Activated naive CD4-positive, alpha-beta T cell treated with anti-CD3 and anti-CD28 coated beads for 36 hours (primary cell): ENCODE measurements at regions of chr7 and their contacts with region 1.

Region 1: DNA sequence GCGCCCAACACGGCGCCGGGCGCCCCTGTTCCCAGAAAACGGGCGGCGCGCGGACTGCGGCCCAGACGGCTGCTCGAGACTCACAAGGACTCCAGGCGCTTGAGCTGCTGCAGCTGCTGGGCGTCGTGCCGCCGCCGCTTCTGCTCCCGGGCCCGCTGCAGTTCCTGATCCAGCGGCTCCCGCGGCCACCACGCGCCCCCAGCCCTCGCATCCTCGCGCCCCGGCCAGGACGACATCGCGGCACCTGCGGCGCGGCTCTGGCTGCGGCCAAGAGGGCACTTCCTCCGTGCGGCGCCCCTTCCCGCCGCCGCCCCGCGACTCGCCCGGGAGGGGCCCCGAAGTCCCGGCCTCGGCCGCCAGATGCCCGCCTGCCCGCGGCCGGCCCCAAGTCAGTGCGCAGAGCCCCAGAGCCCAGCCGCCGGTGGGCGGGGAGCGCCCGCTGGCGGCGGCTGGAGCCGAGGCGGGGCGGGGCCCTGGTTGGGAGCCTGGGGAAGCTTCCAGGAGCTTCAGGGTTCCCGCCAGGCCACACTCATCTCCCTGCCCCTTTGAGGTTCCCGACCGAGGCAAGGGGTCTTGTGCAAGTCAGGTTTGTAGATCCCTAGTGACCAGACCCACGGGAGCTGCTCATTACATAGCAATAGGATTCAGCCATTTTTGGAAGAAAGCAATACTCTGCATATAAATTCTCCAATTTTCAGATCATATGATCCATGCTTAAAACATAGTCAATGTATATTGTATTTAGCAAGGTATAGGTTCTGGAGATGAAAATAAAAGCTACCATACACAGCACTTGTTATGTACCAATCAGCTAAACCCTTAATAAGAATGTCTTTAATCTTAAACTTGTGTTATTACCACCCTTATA is 14.2 kb upstream of the FKBP9 start:
- DNase-seq: peak; percentile 74
- H3K4me3 Mint-ChIP-seq: peak overlapping the region; percentile 66
- H3K27ac Mint-ChIP-seq: no peak overlapping the region
- H3K4me1 Mint-ChIP-seq: peaks cover 18% of the 10 kb centered on the region
- H3K27me3 Mint-ChIP-seq: no peaks in the 10 kb centered on the region

Region 2: GRCh38 chr7:32495298-32496176 is 447.5 kb before region 1 on chr7 and contains the start of gene AVL9:
- CTCF ChIA-PET with region 1: no interaction called
- intact Hi-C with region 1: loop called (anchors 1 kb)
- DNase-seq: peak; percentile 99
- H3K4me3 Mint-ChIP-seq: peak within 1 kb of the TSS; percentile 96
- H3K27ac Mint-ChIP-seq: peak within 1 kb of the TSS; percentile 92
- H3K4me1 Mint-ChIP-seq: peaks cover 38% of the 10 kb centered on the region
- H3K27me3 Mint-ChIP-seq: no peaks in the 10 kb centered on the region
- total RNA-seq, gene AVL9: 29.6 to 38.0 TPM

Region 3: GRCh38 chr7:32761451-32762205 is 181.4 kb before region 1 on chr7:
- CTCF ChIA-PET with region 1: no interaction called
- intact Hi-C with region 1: loop called (anchors 2 kb)
- DNase-seq: no peak
- H3K4me3 Mint-ChIP-seq: no peak overlapping the region
- H3K27ac Mint-ChIP-seq: no peak overlapping the region
- H3K4me1 Mint-ChIP-seq: peaks cover 9% of the 10 kb centered on the region
- H3K27me3 Mint-ChIP-seq: peaks cover 40% of the 10 kb centered on the region

Region 4: GRCh38 chr7:32891800-32892520 is 51.1 kb before region 1 on chr7:
- CTCF ChIA-PET with region 1: interaction called, 6 read pairs
- intact Hi-C with region 1: loop called (anchors 1 kb)
- DNase-seq: peak; percentile 99
- H3K4me3 Mint-ChIP-seq: peak overlapping the region; percentile 89
- H3K27ac Mint-ChIP-seq: peak overlapping the region; percentile 99
- H3K4me1 Mint-ChIP-seq: peaks cover 47% of the 10 kb centered on the region
- H3K27me3 Mint-ChIP-seq: no peaks in the 10 kb centered on the region

Region 5: DNA sequence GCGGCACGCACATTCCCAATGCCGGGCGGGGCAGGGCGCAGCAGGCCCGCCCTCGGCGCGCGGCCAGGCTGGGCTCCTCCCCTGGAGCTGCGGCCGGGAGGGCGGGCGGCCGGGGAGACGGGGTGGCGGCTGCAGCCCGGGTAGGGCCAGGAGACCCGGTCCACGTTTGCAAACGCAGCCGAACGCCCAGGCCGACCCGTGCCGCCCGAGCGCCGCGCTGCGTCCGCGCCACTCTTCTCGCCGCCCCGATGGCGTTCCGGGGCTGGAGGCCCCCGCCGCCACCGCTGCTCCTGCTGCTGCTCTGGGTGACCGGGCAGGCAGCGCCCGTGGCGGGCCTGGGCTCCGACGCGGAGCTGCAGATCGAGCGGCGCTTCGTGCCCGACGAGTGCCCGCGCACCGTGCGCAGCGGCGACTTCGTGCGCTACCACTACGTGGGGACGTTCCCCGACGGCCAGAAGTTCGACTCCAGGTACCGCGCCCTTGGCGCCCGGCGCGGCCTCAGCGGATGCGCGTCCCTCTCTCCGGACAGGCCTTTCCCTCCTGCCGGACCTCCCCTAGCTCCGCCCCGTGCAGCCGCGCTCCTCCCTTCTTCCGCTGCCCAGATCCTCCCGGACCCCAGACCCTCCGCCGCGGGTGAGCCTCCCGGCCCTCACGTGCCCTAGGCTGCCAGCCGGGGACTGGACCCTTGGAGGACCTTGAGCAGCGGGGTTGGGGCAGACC is 14.5 kb after region 1 on chr7 and contains the start of gene FKBP9:
- CTCF ChIA-PET with region 1: interaction called, 14 read pairs
- intact Hi-C with region 1: loop called (anchors 1 kb)
- DNase-seq: no peak
- H3K4me3 Mint-ChIP-seq: peak within 1 kb of the TSS; percentile 63
- H3K27ac Mint-ChIP-seq: no peak within 1 kb of the TSS
- H3K4me1 Mint-ChIP-seq: peaks cover 5% of the 10 kb centered on the region
- H3K27me3 Mint-ChIP-seq: peaks cover 33% of the 10 kb centered on the region
- total RNA-seq, gene FKBP9: 0.62 to 0.64 TPM

Region 6: GRCh38 chr7:33050535-33051318 is 107.7 kb after region 1 on chr7:
- CTCF ChIA-PET with region 1: interaction called, 4 read pairs
- intact Hi-C with region 1: loop called (anchors 1 kb)
- DNase-seq: peak; percentile 38
- H3K4me3 Mint-ChIP-seq: no peak overlapping the region
- H3K27ac Mint-ChIP-seq: no peak overlapping the region
- H3K4me1 Mint-ChIP-seq: peaks cover 54% of the 10 kb centered on the region
- H3K27me3 Mint-ChIP-seq: no peaks in the 10 kb centered on the region